PC-3 (cell line): ENCODE measurements at regions of chr12 and their contacts with region 1.

Region 1: GRCh38 chr12:60257063-60257462 is 661.2 kb downstream of the SLC16A7 start:
- DNase-seq: peak; percentile 80
- ATAC-seq: peak; percentile 86
- H3K4me3 ChIP-seq: no peak overlapping the region
- H3K27ac ChIP-seq: no peak overlapping the region
- H3K4me1 ChIP-seq: peaks cover 20% of the 10 kb centered on the region
- H3K27me3 ChIP-seq: no peaks in the 10 kb centered on the region
- CTCF ChIP-seq: peak; percentile 67

Region 2: DNA sequence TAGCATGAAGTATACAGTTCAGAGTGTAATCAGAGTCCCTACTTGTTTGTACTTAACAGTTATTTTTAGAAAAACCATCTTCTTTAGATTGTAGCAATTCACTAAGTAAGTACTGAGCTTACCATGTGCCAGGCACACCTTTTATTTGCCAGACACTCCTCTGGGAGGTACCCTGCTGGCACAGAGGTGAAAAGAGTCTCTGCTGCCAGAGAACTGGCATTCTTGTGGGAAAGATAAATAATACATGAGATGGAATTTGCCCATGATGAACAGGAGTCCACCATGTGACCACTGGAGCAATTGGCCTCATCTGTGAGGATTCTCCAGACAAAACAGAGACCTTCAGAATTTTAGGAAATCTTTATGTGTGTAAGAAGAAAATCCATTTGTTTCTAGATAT is 860.5 kb before region 1 on chr12:
- CTCF ChIA-PET with region 1: no interaction called
- POLR2A ChIA-PET with region 1: no interaction called
- intact Hi-C with region 1: no loop called
- DNase-seq: peak; percentile 37
- ATAC-seq: peak; percentile 66
- H3K4me3 ChIP-seq: no peak overlapping the region
- H3K27ac ChIP-seq: no peak overlapping the region
- H3K4me1 ChIP-seq: no peaks in the 10 kb centered on the region; the same call in 1 of the 2 replicates
- H3K27me3 ChIP-seq: no peaks in the 10 kb centered on the region
- CTCF ChIP-seq: no peak

Region 3: DNA sequence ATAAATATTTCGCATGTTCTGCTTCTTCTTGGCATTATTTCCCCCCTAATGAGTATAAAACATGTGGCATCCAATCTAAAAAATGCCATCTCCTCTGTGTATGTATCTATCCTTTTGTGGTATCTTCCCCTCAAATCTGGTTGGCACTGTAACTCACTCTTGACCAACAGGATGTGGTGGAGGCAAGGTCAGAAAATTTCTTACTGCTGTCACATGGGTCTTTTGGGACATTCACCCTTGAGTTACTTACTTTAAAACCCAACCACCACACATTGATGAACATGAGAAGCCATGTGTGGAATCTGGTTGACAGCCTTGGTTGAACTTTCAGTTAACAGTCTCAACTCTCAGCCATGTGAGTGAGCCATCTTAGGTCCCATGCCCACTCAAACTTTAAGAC is 144.3 kb before region 1 on chr12:
- CTCF ChIA-PET with region 1: no interaction called
- POLR2A ChIA-PET with region 1: no interaction called
- intact Hi-C with region 1: loop called (anchors 5 kb)
- DNase-seq: peak; percentile 27
- ATAC-seq: no peak
- H3K4me3 ChIP-seq: no peak overlapping the region
- H3K27ac ChIP-seq: no peak overlapping the region
- H3K4me1 ChIP-seq: no peaks in the 10 kb centered on the region
- H3K27me3 ChIP-seq: no peaks in the 10 kb centered on the region
- CTCF ChIP-seq: no peak

Region 4: GRCh38 chr12:60148109-60148508 is 109.0 kb before region 1 on chr12:
- CTCF ChIA-PET with region 1: no interaction called
- POLR2A ChIA-PET with region 1: no interaction called
- intact Hi-C with region 1: loop called (anchors 5 kb)
- DNase-seq: peak; percentile 84
- ATAC-seq: peak; percentile 82
- H3K4me3 ChIP-seq: no peak overlapping the region
- H3K27ac ChIP-seq: peak overlapping the region; percentile 72
- H3K4me1 ChIP-seq: peaks cover 25% of the 10 kb centered on the region
- H3K27me3 ChIP-seq: no peaks in the 10 kb centered on the region
- CTCF ChIP-seq: no peak